Activated CD4-positive, alpha-beta memory T cell treated with anti-CD3 and anti-CD28 coated beads for 36 hours (primary cell): ENCODE measurements at regions of chr7 and their contacts with region 1.

Region 1: GRCh38 chr7:77460057-77460486 is 43.9 kb upstream of the GSAP start:
- DNase-seq: no peak
- H3K4me3 Mint-ChIP-seq: no peak overlapping the region
- H3K27ac Mint-ChIP-seq: no peak overlapping the region
- H3K4me1 Mint-ChIP-seq: peaks cover 14% of the 10 kb centered on the region
- H3K27me3 Mint-ChIP-seq: no peaks in the 10 kb centered on the region

Region 2: DNA sequence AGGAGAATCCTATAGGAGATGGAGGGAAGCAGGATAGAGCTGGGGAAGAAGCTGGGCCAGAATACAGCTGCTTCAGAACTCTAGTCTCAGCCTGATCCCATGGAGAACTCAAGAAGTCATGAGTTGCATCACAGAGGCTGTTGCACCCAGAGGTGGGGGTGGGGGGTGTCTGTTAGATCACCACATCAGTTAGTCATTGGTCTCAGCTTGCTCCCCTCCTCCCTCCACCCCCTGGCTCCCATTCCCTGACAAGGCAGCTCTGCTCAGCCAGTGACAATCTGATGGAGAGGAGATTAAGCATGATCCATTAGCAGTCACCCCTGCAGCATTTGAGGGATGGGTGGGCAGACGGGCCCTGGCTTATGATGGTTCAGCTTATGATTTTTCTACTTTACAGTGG is 202.1 kb before region 1 on chr7:
- CTCF ChIA-PET with region 1: no interaction called
- POLR2A ChIA-PET with region 1: no interaction called
- intact Hi-C with region 1: no loop called
- DNase-seq: peak; percentile 9
- H3K4me3 Mint-ChIP-seq: no peak overlapping the region
- H3K27ac Mint-ChIP-seq: no peak overlapping the region
- H3K4me1 Mint-ChIP-seq: no peaks in the 10 kb centered on the region
- H3K27me3 Mint-ChIP-seq: no peaks in the 10 kb centered on the region

Region 3: GRCh38 chr7:77415823-77416622 is 44.0 kb before region 1 on chr7 and contains the start of gene GSAP:
- CTCF ChIA-PET with region 1: no interaction called
- POLR2A ChIA-PET with region 1: no interaction called
- intact Hi-C with region 1: loop called (anchors 5 kb)
- DNase-seq: peak; percentile 61
- H3K4me3 Mint-ChIP-seq: peak within 1 kb of the TSS; percentile 59
- H3K27ac Mint-ChIP-seq: no peak within 1 kb of the TSS
- H3K4me1 Mint-ChIP-seq: peaks cover 32% of the 10 kb centered on the region
- H3K27me3 Mint-ChIP-seq: peaks cover 3% of the 10 kb centered on the region
- total RNA-seq, gene GSAP: 1.7 to 1.9 TPM